GM10248 (cell line): ENCODE measurements at regions of chr19 and their contacts with region 1.

Region 1: DNA sequence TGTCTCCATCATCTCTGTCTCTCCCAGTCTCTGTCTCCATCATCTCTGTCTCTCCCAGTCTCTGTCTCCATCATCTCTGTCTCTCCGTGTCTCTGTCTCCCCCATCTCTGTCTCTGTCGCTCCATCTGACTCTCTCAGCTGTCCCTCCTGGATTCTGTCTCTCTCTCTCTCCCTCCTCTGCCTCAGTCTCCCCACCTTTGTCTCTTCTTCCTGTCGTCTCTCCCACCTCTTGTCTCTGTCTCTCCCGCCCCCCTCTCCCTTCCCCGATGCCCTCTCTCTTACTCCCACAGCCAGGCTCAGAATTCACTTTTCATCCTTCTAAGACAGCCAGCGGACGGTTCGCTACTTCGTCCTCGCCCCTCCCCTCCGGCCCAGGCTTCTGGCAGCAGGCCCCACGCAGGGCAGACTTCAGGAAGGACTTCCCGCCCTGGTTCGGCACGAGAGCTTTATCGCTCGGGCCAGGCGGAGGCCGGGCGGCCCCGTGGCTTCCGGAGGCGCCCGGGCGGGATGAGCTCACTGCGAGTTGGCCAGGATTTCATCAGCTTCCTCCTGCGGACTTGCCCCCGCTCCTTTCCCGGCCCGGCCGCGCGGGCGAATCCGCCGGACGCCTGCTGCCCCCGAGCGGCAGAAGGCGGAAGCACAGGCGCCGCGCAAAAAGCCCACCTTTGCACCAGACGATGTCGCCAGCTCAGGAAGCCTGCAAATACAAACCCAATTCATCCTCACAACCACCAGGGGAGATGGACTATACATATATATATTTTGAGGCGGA is 12.4 kb upstream of the CCDC9 start:
- DNase-seq: peak; percentile 89
- CTCF ChIP-seq: peak; percentile 99

Region 2: GRCh38 chr19:47035127-47036096 is 208.6 kb before region 1 on chr19:
- CTCF ChIA-PET with region 1: interaction called, 10 read pairs
- POLR2A ChIA-PET with region 1: no interaction called
- DNase-seq: peak; percentile 97
- CTCF ChIP-seq: peak; percentile 93

Region 3: DNA sequence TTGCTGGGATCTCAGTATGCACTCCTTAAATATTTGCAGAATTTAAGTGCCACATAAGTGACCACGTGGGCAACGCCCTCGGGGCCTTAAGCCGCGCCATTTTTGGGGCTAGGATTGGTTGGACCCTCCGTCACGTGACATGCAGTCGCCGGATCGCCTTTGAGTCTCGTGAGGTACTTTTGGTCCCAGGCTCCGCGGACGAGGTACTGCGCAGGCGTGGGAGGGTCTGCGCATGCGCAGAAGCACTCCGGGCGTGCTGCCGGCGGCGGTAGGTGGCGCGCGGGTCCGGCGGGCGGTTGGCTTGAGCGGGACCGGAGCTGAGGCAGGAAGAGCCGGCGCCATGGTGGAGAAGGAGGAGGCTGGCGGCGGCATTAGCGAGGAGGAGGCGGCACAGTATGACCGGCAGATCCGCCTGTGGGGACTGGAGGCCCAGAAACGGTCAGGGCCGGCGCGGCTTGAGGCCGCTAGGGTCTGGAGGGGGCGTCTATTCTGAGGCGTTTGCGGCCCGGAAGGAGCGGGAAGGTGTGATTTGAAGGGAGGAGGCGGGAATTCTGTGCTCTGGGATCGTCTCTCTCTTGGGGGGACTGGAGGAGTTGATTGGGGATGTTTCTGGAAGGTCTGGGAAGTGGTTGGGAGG is 113.3 kb before region 1 on chr19 and contains the start of gene SAE1:
- CTCF ChIA-PET with region 1: interaction called, 27 read pairs
- POLR2A ChIA-PET with region 1: interaction called, 3 read pairs
- DNase-seq: peak; percentile 99
- CTCF ChIP-seq: peak; percentile 78

Region 4: DNA sequence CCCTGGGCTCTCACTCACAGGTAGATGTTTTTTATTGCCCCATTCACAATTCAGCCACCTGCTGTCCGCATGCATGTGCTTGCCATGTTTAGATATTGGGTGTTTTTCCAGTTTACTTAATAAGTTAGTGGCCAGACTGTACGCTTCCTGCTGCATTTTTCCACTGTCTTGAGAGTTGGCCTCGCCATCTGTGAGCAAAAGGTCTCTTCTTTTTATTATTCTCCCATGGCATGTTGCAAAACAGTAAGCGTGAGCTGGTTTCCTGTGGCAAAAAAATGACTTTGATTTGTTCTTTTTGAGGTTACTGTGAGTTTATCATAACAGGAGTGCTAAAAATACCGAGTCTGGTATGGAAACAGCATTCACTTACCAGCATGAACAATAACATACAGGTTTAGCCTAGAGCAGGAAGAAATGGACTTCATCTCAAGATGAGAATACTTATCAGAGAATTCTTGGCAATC is 67.3 kb before region 1 on chr19:
- CTCF ChIA-PET with region 1: interaction called, 28 read pairs
- POLR2A ChIA-PET with region 1: no interaction called
- DNase-seq: no peak
- CTCF ChIP-seq: no peak

Region 5: DNA sequence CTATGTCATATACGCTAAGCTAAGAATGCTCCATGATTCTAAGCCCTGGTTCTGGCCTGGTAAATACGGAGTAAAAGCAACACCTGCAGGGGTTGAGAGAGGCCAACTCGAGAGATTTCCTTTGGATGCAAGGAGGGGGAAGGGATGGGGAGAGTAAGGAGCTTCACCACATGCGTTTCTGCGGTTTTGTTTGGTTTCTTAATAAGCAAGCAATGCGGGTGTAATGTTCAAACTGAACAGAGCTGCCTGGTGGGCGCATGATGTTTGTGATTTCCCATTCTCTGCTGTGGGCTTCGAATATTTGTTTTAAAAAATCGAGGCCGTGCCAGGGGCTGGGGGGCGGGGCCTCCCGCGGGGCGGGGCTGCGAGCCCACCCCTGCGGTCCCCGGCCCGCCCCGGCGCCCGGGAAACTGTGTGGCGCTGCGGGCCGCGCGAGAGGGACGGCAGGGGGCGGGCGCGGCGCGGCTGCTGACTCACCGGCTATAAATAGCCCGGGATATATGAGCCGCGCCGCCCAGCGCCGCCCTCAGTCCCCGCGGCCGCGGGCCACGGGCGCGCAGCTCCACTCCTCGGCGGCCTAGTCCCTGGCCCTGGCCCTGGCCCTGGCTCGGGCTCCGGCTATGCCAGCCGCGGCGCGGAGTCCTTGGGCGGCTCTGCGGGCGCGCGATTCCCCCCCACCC is 18.1 kb before region 1 on chr19:
- CTCF ChIA-PET with region 1: interaction called, 67 read pairs
- POLR2A ChIA-PET with region 1: interaction called, 56 read pairs
- DNase-seq: peak; percentile 94
- CTCF ChIP-seq: peak; percentile 34

Region 6: GRCh38 chr19:47273313-47273977 is 29.5 kb after region 1 on chr19:
- CTCF ChIA-PET with region 1: interaction called, 14 read pairs
- POLR2A ChIA-PET with region 1: no interaction called
- DNase-seq: peak; percentile 93
- CTCF ChIP-seq: no peak

Region 7: GRCh38 chr19:47305309-47305751 is 61.4 kb after region 1 on chr19:
- CTCF ChIA-PET with region 1: no interaction called
- POLR2A ChIA-PET with region 1: no interaction called
- DNase-seq: peak; percentile 57
- CTCF ChIP-seq: peak; percentile 95